IMR-90 (cell line): ENCODE measurements at regions of chr11 and their contacts with region 1.

Region 1: GRCh38 chr11:47213985-47214564 is 699 bp upstream of the DDB2 start:
- DNase-seq: peak; percentile 61
- ATAC-seq: peak; percentile 49
- H3K4me3 ChIP-seq: peak overlapping the region; percentile 8; the same call in 1 of the 2 replicates
- H3K27ac ChIP-seq: peak overlapping the region; percentile 61
- H3K4me1 ChIP-seq: peaks cover 9% of the 10 kb centered on the region
- H3K27me3 ChIP-seq: no peaks in the 10 kb centered on the region
- CTCF ChIP-seq: no peak
- POLR2A ChIP-seq: no peak
- RAD21 ChIP-seq: no peak

Region 2: GRCh38 chr11:45933131-45933831 is 1280.8 kb before region 1 on chr11:
- CTCF ChIA-PET with region 1: no interaction called
- POLR2A ChIA-PET with region 1: no interaction called
- dilution Hi-C with region 1: no loop called
- in situ Hi-C with region 1: no loop called
- intact Hi-C with region 1: no loop called
- DNase-seq: peak; percentile 71
- ATAC-seq: no peak
- H3K4me3 ChIP-seq: no peak overlapping the region
- H3K27ac ChIP-seq: no peak overlapping the region
- H3K4me1 ChIP-seq: no peaks in the 10 kb centered on the region; the same call in 1 of the 2 replicates
- H3K27me3 ChIP-seq: no peaks in the 10 kb centered on the region
- CTCF ChIP-seq: no peak
- POLR2A ChIP-seq: no peak
- RAD21 ChIP-seq: no peak

Region 3: GRCh38 chr11:47189100-47189834 is 24.8 kb before region 1 on chr11:
- CTCF ChIA-PET with region 1: interaction called, 6 read pairs
- POLR2A ChIA-PET with region 1: interaction called, 17 read pairs
- dilution Hi-C with region 1: no loop called
- in situ Hi-C with region 1: no loop called
- intact Hi-C with region 1: no loop called
- DNase-seq: peak; percentile 86
- ATAC-seq: peak; percentile 10
- H3K4me3 ChIP-seq: no peak overlapping the region
- H3K27ac ChIP-seq: no peak overlapping the region
- H3K4me1 ChIP-seq: peaks cover 18% of the 10 kb centered on the region
- H3K27me3 ChIP-seq: no peaks in the 10 kb centered on the region
- CTCF ChIP-seq: no peak
- POLR2A ChIP-seq: no peak
- RAD21 ChIP-seq: no peak

Region 4: GRCh38 chr11:47233989-47234668 is 20.1 kb after region 1 on chr11:
- CTCF ChIA-PET with region 1: interaction called, 3 read pairs
- POLR2A ChIA-PET with region 1: interaction called, 11 read pairs
- dilution Hi-C with region 1: no loop called
- in situ Hi-C with region 1: no loop called
- intact Hi-C with region 1: no loop called
- DNase-seq: peak; percentile 67
- ATAC-seq: peak; percentile 83
- H3K4me3 ChIP-seq: no peak overlapping the region
- H3K27ac ChIP-seq: peak overlapping the region; percentile 51
- H3K4me1 ChIP-seq: peaks cover 14% of the 10 kb centered on the region
- H3K27me3 ChIP-seq: no peaks in the 10 kb centered on the region
- CTCF ChIP-seq: peak; percentile 50
- POLR2A ChIP-seq: no peak
- RAD21 ChIP-seq: peak; percentile 43

Region 5: GRCh38 chr11:47248664-47249377 is 34.7 kb after region 1 on chr11 and contains the start of gene ACP2:
- CTCF ChIA-PET with region 1: no interaction called
- POLR2A ChIA-PET with region 1: no interaction called
- dilution Hi-C with region 1: no loop called
- in situ Hi-C with region 1: no loop called
- intact Hi-C with region 1: loop called (anchors 2 kb)
- DNase-seq: peak; percentile 87
- ATAC-seq: peak; percentile 97
- H3K4me3 ChIP-seq: peak within 1 kb of the TSS; percentile 66
- H3K27ac ChIP-seq: peak within 1 kb of the TSS; percentile 86
- H3K4me1 ChIP-seq: peaks cover 11% of the 10 kb centered on the region
- H3K27me3 ChIP-seq: no peaks in the 10 kb centered on the region
- CTCF ChIP-seq: peak; percentile 27; the same call in 1 of the 2 replicates
- POLR2A ChIP-seq: peak; percentile 70; the same call in 1 of the 2 replicates
- RAD21 ChIP-seq: 0 out of 2 replicates have a peak, but pooled peaks have one; percentile 7
- total RNA-seq, gene ACP2: 10.3 and 17.7 TPM in 2 replicates

Region 6: DNA sequence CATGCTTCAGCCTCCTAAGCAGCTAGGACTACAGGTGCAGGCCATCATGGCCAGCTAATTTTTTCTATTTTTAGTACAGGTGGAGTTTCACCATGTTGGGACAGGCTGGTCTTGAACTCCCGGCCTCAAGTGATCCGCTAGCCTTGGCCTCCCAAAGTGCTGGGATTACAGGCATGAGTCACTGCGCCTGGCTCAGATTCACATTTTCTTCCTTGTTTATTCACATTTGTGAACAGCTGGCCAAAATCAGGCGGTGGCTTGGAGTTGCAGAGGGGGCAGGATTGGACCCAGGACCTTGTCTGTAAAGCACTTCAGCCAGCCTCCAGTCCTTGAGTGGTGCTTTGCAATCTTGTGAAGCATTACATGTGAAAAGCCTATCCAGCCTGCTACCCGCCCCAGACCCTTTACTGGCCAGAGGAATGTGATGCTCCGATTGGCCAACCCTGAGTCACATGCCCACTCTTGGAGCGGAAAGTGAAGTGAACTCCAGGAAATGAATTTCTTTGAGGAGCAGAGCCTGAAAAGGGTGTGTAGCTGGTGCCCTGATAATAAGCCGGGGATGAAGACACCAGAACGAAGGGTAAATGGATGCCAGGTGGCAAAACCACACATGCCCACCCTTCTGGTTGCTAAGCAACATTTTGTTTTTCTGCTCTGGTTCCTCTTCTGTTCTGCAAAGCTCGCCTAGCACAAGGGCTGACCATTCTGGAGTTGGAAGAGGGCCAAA is 703.7 kb after region 1 on chr11:
- CTCF ChIA-PET with region 1: no interaction called
- POLR2A ChIA-PET with region 1: no interaction called
- dilution Hi-C with region 1: no loop called
- in situ Hi-C with region 1: no loop called
- intact Hi-C with region 1: no loop called
- DNase-seq: peak; percentile 98
- ATAC-seq: peak; percentile 98
- H3K4me3 ChIP-seq: peak overlapping the region; percentile 6; the same call in 1 of the 2 replicates
- H3K27ac ChIP-seq: peak overlapping the region; percentile 74; the same call in 1 of the 2 replicates
- H3K4me1 ChIP-seq: peaks cover 11% of the 10 kb centered on the region
- H3K27me3 ChIP-seq: no peaks in the 10 kb centered on the region
- CTCF ChIP-seq: no peak
- POLR2A ChIP-seq: no peak
- RAD21 ChIP-seq: no peak